Activated T-helper 2 cell treated with anti-CD3 and anti-CD28 coated beads, Interferon-gamma antibody, Interleukin-2, Interleukin-4, amounts not matched to agents 10 μg/mL and 5 μg/mL and 100 μg/mL, durations not matched to agents 14 hours and 24 hours and 36 hours (primary cell): ENCODE measurements at regions of chr2 and their contacts with region 1.

Region 1: DNA sequence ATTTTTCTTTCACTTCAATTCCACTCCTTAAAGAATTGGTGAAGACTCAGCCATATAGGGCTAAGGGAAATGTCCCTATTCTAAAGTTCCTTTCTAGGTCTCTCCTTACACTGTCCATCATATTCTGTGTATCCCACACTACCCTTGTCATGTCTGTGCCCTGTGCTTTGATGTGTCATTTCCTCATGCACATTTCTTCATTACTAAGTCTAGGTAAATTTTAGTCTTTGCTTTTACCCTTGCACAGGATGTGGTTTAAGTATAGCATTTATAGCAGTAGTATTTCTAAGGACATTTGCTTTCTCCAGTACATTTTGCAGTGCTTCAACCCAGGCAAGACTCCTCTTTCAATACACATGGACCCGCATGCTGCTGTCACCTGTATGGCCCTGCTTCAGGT is 221.5 kb upstream of the ACVR2A start:
- DNase-seq: no peak
- H3K4me3 Mint-ChIP-seq: no peak overlapping the region
- H3K27ac Mint-ChIP-seq: peak overlapping the region; percentile 64
- H3K4me1 Mint-ChIP-seq: peaks cover 29% of the 10 kb centered on the region
- H3K27me3 Mint-ChIP-seq: peaks cover 1% of the 10 kb centered on the region

Region 2: DNA sequence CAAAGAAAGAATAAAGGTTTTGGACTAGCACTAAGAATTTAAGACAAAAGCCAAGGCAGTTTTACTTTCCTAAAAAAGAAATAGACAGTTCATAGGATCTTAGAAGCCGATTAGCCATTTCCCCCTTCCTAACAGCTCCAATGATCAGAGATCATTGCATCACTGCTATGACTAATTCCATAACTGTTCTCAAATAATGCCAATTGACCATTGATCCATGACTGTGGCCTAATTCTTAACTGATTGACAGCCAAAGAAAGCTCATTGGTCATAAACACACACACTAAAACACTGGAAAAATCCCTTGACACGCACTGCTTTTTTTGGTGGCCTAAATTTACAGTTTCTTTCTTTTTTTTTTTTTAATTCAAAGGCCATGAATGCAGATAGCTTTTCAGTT is 123.5 kb before region 1 on chr2:
- intact Hi-C with region 1: loop called (anchors 5 kb)
- DNase-seq: no peak
- H3K4me3 Mint-ChIP-seq: peak overlapping the region; percentile 51
- H3K27ac Mint-ChIP-seq: peak overlapping the region; percentile 91
- H3K4me1 Mint-ChIP-seq: peaks cover 61% of the 10 kb centered on the region
- H3K27me3 Mint-ChIP-seq: no peaks in the 10 kb centered on the region